Activated CD4-positive, alpha-beta memory T cell treated with anti-CD3 and anti-CD28 coated beads, Interleukin-2, amount 10 ng/mL, durations not matched to agents 7 days and 5 days (primary cell): ENCODE measurements at regions of chr5 and their contacts with region 1.

Region 1: DNA sequence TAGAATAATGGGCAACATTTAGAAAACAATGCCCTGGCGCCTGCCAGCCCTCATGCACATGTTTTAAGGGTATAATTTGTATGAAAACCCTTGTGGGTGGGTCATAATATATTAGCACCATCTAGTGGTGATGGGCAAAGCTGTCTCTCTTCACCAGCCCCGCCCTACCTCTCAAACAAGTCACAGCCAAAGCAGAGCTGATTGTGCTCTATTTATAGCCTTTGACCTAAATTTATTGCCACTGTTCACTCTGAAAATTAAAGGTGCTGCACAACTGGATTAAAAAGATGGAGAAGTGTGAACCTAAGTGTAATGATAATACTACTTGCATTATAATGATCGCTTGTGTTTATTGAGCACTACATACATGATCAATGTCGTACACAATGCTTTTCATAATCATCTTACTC is 131.9 kb upstream of the ANKH start:
- DNase-seq: peak; percentile 64
- H3K4me3 Mint-ChIP-seq: no peak overlapping the region
- H3K27ac Mint-ChIP-seq: no peak overlapping the region
- H3K4me1 Mint-ChIP-seq: peaks cover 19% of the 10 kb centered on the region
- H3K27me3 Mint-ChIP-seq: peaks cover 30% of the 10 kb centered on the region

Region 2: DNA sequence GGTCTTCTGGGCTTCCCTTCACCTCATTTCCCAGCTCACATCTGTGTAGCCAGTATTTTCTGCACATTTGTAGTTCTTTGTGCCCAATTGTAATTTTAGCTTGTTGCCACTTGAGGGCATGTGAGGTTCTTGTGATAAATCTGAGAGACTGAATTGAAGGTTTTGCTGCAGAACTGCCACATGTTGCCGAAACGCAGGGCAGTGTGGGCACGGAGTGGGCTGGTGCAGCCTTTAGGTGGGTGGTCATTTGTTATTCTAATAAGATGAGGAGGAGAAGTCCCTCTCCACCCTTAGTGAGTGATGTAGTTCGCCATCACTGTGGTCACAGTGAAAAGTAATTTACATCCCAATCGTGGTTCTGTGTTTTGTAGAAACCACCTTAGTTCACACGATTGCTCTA is 317.8 kb before region 1 on chr5:
- CTCF ChIA-PET with region 1: interaction called, 19 read pairs
- POLR2A ChIA-PET with region 1: interaction called, 4 read pairs
- DNase-seq: peak; percentile 42
- H3K4me3 Mint-ChIP-seq: no peak overlapping the region
- H3K27ac Mint-ChIP-seq: peak overlapping the region; percentile 21
- H3K4me1 Mint-ChIP-seq: peaks cover 15% of the 10 kb centered on the region
- H3K27me3 Mint-ChIP-seq: no peaks in the 10 kb centered on the region

Region 3: DNA sequence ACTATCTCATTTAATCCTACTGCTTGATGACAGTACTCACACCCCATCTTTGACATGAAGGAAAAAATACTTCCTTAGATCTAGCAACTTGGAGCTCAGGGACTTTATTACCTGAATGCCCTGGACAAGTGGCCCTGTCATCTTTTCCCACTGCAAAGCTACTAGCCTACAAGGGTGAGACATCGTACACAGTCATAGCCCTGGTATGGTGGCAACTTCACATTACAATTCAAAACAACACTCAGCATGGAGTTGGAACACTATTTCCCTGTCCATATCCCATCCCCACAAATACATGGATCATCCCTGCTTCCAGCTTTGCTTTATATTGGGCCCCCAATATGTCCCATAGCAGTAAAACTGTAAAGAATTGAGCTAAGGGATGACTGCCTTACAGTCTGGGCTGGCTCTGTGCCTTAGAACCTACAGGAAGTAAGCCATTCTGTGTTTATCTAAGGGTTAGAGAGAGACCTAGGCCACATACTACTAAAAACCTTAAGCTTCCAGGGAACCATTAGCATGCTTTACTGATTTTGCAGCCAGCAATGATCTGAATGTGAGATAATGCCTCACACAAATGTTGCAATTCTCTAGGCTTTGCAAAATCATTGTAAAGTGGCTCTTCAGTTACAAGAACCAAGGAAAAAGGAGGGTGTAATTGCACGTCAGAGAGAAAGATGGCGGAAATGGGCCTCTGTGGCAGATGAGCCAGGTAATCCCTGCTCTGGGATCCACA is 283.1 kb before region 1 on chr5:
- CTCF ChIA-PET with region 1: interaction called, 111 read pairs
- POLR2A ChIA-PET with region 1: no interaction called
- DNase-seq: no peak
- H3K4me3 Mint-ChIP-seq: no peak overlapping the region
- H3K27ac Mint-ChIP-seq: no peak overlapping the region
- H3K4me1 Mint-ChIP-seq: peaks cover 11% of the 10 kb centered on the region
- H3K27me3 Mint-ChIP-seq: no peaks in the 10 kb centered on the region

Region 4: DNA sequence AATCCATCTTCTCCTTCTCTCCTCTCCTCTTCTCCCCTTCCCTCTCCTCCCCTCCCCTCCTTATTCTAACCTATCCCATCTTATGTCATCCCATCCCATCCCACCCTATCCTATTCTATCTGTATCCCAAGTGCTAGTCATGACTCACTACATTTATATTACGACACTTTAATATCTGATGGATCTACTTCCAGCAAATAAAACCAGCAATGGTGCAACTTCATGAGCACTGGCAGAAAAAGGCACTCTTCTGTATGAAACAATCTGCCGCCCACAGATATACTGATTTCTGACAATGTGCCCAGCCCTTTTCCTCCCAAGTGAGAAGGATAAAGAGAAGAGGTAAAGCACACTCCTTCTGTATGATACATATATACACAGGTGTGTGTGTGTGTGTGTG is 45.3 kb before region 1 on chr5:
- CTCF ChIA-PET with region 1: interaction called, 16 read pairs
- POLR2A ChIA-PET with region 1: interaction called, 3 read pairs
- DNase-seq: no peak
- H3K4me3 Mint-ChIP-seq: no peak overlapping the region
- H3K27ac Mint-ChIP-seq: no peak overlapping the region
- H3K4me1 Mint-ChIP-seq: no peaks in the 10 kb centered on the region
- H3K27me3 Mint-ChIP-seq: no peaks in the 10 kb centered on the region